IMR-90 (cell line): ENCODE measurements at regions of chr14 and their contacts with region 1.

Region 1: GRCh38 chr14:58072288-58073071 is 79.5 kb downstream of the ARMH4 start:
- DNase-seq: peak; percentile 74
- ATAC-seq: peak; percentile 94
- H3K4me3 ChIP-seq: no peak overlapping the region
- H3K27ac ChIP-seq: no peak overlapping the region
- H3K4me1 ChIP-seq: peaks cover 5% of the 10 kb centered on the region
- H3K27me3 ChIP-seq: peaks cover 2% of the 10 kb centered on the region; the same call in 1 of the 2 replicates
- CTCF ChIP-seq: peak; percentile 83
- POLR2A ChIP-seq: no peak
- RAD21 ChIP-seq: peak; percentile 81

Region 2: GRCh38 chr14:57209561-57209960 is 862.9 kb before region 1 on chr14:
- CTCF ChIA-PET with region 1: no interaction called
- POLR2A ChIA-PET with region 1: no interaction called
- dilution Hi-C with region 1: no loop called
- in situ Hi-C with region 1: no loop called
- intact Hi-C with region 1: loop called (anchors 5 kb)
- DNase-seq: peak; percentile 73
- ATAC-seq: peak; percentile 85
- H3K4me3 ChIP-seq: no peak overlapping the region
- H3K27ac ChIP-seq: no peak overlapping the region
- H3K4me1 ChIP-seq: peaks cover 3% of the 10 kb centered on the region; the same call in 1 of the 2 replicates
- H3K27me3 ChIP-seq: no peaks in the 10 kb centered on the region
- CTCF ChIP-seq: no peak
- POLR2A ChIP-seq: no peak
- RAD21 ChIP-seq: no peak

Region 3: DNA sequence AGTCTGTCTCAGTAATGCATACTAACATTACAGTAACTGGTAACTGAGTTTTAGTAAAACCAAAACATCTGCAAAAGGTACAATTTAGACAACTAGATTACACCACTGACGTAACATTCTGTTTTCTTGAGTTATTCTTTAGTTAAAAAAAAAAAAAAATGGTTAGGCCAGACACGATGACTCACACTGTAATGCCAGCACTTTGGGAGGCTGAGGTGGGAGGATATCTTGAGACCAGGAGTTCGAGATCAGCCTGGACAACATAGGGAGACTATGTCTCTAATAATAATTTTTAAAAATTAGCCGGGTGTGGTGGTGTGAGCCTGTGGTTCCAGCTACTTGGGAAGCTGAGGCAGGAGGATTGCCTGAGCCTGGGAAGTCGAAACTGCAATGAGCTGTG is 769.6 kb before region 1 on chr14:
- CTCF ChIA-PET with region 1: no interaction called
- POLR2A ChIA-PET with region 1: no interaction called
- dilution Hi-C with region 1: no loop called
- in situ Hi-C with region 1: no loop called
- intact Hi-C with region 1: no loop called
- DNase-seq: no peak
- ATAC-seq: no peak
- H3K4me3 ChIP-seq: no peak overlapping the region
- H3K27ac ChIP-seq: no peak overlapping the region
- H3K4me1 ChIP-seq: no peaks in the 10 kb centered on the region
- H3K27me3 ChIP-seq: peaks cover 11% of the 10 kb centered on the region
- CTCF ChIP-seq: no peak
- POLR2A ChIP-seq: no peak
- RAD21 ChIP-seq: no peak

Region 4: GRCh38 chr14:57317316-57317715 is 755.2 kb before region 1 on chr14:
- CTCF ChIA-PET with region 1: no interaction called
- POLR2A ChIA-PET with region 1: no interaction called
- dilution Hi-C with region 1: no loop called
- in situ Hi-C with region 1: no loop called
- intact Hi-C with region 1: loop called (anchors 10 kb)
- DNase-seq: peak; percentile 78
- ATAC-seq: peak; percentile 85
- H3K4me3 ChIP-seq: no peak overlapping the region
- H3K27ac ChIP-seq: no peak overlapping the region
- H3K4me1 ChIP-seq: no peaks in the 10 kb centered on the region
- H3K27me3 ChIP-seq: peaks cover 7% of the 10 kb centered on the region
- CTCF ChIP-seq: peak; percentile 93
- POLR2A ChIP-seq: no peak
- RAD21 ChIP-seq: peak; percentile 85

Region 5: GRCh38 chr14:57486767-57487379 is 585.6 kb before region 1 on chr14:
- CTCF ChIA-PET with region 1: interaction called, 4 read pairs
- POLR2A ChIA-PET with region 1: no interaction called
- dilution Hi-C with region 1: no loop called
- in situ Hi-C with region 1: loop called (anchors 5 kb)
- intact Hi-C with region 1: loop called (anchors 1 kb)
- DNase-seq: peak; percentile 41
- ATAC-seq: peak; percentile 37; the same call in 1 of the 2 replicates
- H3K4me3 ChIP-seq: no peak overlapping the region
- H3K27ac ChIP-seq: no peak overlapping the region
- H3K4me1 ChIP-seq: no peaks in the 10 kb centered on the region
- H3K27me3 ChIP-seq: peaks cover 2% of the 10 kb centered on the region; the same call in 1 of the 2 replicates
- CTCF ChIP-seq: peak; percentile 60
- POLR2A ChIP-seq: no peak
- RAD21 ChIP-seq: peak; percentile 57

Region 6: DNA sequence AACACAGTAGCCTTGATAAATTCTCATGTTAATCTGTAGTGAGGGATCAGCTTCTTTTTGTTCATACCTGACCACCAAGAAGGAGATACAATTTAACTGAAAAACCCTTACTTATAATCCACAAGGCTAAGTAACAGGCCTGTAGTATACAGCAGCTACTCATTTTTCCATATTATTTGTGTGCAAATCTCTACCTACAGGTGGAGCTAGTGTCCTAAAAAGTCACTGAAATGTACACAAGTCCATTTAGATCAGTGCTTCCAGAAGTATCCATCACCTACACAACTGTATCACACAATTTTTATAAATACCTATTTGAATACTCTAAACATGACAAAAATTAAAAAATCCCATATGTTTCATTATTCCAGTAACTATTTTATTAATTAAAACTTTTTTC is 379.8 kb before region 1 on chr14:
- CTCF ChIA-PET with region 1: no interaction called
- POLR2A ChIA-PET with region 1: no interaction called
- dilution Hi-C with region 1: no loop called
- in situ Hi-C with region 1: no loop called
- intact Hi-C with region 1: loop called (anchors 2 kb)
- DNase-seq: peak; percentile 34
- ATAC-seq: no peak; the same call in 1 of the 2 replicates
- H3K4me3 ChIP-seq: no peak overlapping the region
- H3K27ac ChIP-seq: no peak overlapping the region
- H3K4me1 ChIP-seq: no peaks in the 10 kb centered on the region
- H3K27me3 ChIP-seq: no peaks in the 10 kb centered on the region
- CTCF ChIP-seq: peak; percentile 48
- POLR2A ChIP-seq: no peak
- RAD21 ChIP-seq: peak; percentile 51

Region 7: GRCh38 chr14:57845802-57846531 is 226.5 kb before region 1 on chr14:
- CTCF ChIA-PET with region 1: no interaction called
- POLR2A ChIA-PET with region 1: no interaction called
- dilution Hi-C with region 1: no loop called
- in situ Hi-C with region 1: no loop called
- intact Hi-C with region 1: no loop called
- DNase-seq: no peak
- ATAC-seq: no peak
- H3K4me3 ChIP-seq: no peak overlapping the region
- H3K27ac ChIP-seq: no peak overlapping the region
- H3K4me1 ChIP-seq: no peaks in the 10 kb centered on the region
- H3K27me3 ChIP-seq: no peaks in the 10 kb centered on the region
- CTCF ChIP-seq: no peak
- POLR2A ChIP-seq: no peak
- RAD21 ChIP-seq: no peak

Region 8: DNA sequence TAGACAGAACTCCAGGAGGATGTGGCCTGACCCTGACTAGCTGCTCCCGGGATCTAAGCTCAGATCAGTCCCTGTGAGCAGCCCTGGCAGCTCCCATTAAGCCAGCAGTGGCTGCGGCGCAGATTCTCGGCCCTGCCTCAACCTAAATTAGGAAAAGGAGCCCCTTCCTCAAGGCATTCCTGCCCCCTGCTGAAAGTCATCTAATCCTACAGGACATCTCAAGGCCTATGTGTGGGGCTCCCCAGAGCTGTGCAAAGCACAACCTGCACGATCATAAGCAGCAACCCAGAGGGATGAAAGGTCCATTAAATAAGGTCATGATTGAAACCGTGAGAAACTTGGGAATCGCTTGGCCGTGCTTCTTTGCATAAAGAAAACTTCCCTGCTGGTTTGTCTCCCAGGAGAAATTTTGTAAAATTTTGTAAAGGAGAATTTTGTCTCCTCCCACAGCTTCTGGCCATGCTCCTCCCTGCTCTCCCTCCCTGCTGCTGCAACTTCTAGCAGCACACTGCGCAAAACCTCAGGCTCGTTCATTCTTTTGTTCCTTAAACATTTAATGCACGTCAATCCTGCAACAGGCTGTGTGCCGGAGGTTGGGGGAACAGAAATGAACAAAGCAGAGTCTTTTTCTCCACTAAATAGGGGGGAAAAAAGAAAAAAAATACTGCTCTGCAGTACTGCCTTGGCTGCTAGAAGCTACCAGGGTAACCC is 110.0 kb before region 1 on chr14:
- CTCF ChIA-PET with region 1: no interaction called
- POLR2A ChIA-PET with region 1: no interaction called
- dilution Hi-C with region 1: no loop called
- in situ Hi-C with region 1: no loop called
- intact Hi-C with region 1: no loop called
- DNase-seq: no peak
- ATAC-seq: no peak
- H3K4me3 ChIP-seq: no peak overlapping the region
- H3K27ac ChIP-seq: no peak overlapping the region
- H3K4me1 ChIP-seq: no peaks in the 10 kb centered on the region
- H3K27me3 ChIP-seq: no peaks in the 10 kb centered on the region
- CTCF ChIP-seq: no peak
- POLR2A ChIP-seq: no peak
- RAD21 ChIP-seq: no peak

Region 9: DNA sequence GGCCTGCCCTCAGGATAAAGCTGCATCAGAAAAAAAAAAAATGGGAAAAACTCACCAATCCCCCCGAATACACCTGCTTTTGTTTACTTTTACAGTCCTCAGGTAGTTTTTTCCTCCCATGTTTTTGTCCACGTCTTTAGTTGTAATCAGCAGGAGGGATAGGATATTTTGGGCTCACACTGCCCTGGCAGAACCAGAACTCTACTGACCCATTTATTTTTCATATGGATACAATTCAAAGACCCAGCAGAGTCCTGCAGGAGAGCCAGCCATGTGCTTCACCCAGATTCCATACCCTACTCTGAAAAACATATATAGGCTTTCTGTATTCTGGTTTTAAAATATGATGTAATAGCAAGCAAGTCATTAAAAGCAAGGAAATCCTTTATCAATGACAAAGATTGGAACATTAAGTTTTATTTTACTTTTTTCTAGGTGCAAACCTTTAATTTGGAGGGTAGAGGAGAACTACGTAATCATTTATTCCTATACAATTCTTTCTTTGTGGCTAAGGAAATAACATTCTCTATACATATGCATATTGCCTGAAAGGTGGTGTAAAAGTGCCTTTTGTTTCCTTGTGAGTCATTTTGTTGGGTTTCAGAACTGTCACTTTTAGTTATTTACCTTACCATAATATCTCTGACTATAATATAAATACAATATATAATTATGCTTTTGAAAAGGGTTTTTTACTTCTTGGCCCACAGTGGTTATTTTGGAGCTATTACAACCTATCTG is 584.4 kb after region 1 on chr14:
- CTCF ChIA-PET with region 1: no interaction called
- POLR2A ChIA-PET with region 1: no interaction called
- dilution Hi-C with region 1: no loop called
- in situ Hi-C with region 1: no loop called
- intact Hi-C with region 1: no loop called
- DNase-seq: no peak
- ATAC-seq: no peak
- H3K4me3 ChIP-seq: no peak overlapping the region
- H3K27ac ChIP-seq: no peak overlapping the region
- H3K4me1 ChIP-seq: no peaks in the 10 kb centered on the region
- H3K27me3 ChIP-seq: no peaks in the 10 kb centered on the region
- CTCF ChIP-seq: no peak
- POLR2A ChIP-seq: no peak
- RAD21 ChIP-seq: no peak